ENCODE measurements at regions of chr6 and their contacts with region 1.

Region 1: DNA sequence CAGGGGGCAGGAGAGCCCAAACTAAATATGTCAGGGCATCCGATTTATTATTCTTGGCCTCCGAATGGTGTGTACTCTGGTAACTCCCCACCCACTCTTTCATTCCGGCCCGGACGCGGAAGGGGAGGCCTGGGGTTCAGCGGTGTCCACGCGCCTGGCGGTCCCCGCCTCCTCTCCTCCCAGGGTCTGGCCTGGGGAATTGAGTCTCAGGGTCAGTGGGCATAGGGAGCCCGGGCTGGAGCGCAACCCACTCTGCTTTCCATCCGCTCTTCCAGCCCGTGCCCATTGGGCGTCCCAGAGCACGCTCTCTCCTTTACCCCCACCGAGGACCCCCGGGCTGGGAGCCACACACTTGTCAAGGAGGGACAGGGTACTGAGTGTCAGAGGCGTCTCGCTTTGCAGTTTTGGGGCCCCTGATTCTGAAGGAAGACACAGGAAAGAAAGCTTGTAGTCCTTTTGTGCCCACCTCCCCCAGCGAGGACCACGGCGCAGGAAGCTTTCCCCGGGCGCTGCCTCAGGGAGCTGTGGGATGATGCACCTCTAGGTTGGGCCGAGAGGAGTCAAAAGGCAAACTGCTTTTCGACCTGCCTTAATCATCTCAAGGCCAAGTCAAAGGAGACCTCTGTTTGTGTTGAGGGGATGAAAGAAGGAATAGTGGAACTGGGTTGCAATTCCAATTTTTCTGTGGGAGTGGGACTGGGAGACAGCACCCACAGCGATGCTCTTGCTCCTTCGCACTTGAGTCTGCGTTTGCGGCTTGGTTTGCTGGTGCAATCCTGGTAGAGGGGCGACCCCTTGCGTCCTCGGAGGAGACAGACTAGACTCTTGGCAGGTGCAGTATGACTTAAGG is 2.5 kb downstream of the RSPO3 start:
- DNase-seq: peak; percentile 59 to 91 (median 78)
- H3K4me3 ChIP-seq: peak overlapping the region in 58 of 59 donors; percentile 45 to 79 (median 62)
- H3K27ac ChIP-seq: peak overlapping the region in 2 of 59 donors; percentile 2 to 5
- H3K27me3 ChIP-seq: peaks cover 0 to 61% (median 25%) of the 10 kb centered on the region in 45 donors
- CTCF ChIP-seq: peak; percentile 17 to 85 (median 68)

Region 2: GRCh38 chr6:125995972-125996580 is 1124.9 kb before region 1 on chr6:
- intact Hi-C with region 1: loop called in 1 of 2 experiments (anchors 5 kb)
- DNase-seq: peak in 7 of 10 donors; percentile 32 to 75 (median 67)
- H3K4me3 ChIP-seq: peak overlapping the region in 27 of 59 donors; percentile 2 to 49 (median 27)
- H3K27ac ChIP-seq: no peak overlapping the region
- H3K27me3 ChIP-seq: no peaks in the 10 kb centered on the region
- CTCF ChIP-seq: peak; percentile 84 to 99 (median 95)

Region 3: DNA sequence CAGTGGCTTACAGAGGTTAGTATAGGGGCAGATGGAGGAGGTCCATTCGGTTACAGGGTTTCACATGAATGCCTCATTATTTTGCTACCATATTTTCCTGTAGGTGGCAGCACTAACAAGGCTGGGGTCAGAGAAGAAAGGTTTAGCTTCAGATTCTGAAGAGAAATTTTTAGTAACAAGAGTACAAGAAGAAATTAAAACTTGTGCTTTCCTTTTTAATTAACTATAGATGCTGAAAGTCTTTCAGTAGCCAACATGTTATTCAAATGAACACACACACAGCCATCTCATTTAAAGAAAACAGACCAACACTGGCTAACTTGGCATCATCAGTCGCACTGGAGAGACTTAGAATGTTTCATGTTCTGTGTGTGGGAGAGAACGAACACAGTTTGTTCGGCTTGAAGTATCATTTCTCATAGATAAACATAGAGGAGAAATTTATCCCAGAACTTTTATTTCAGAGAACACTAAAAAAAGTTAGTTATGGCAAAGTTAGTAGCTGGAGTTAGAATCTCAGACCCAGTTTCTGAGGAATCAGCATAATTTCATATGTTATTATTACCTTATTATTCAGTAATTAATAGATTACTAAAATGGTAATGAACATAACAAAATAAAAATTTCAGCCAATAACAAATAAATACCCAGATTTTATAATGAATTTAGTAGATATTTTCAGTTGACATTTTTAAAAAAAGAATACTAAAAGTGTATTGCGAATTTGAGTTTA is 316.5 kb before region 1 on chr6:
- intact Hi-C with region 1: loop called (anchors 5 kb)
- DNase-seq: peak in 1 of 10 donors; percentile 7
- H3K4me3 ChIP-seq: no peak overlapping the region
- H3K27ac ChIP-seq: no peak overlapping the region
- H3K27me3 ChIP-seq: peaks cover 0 to 23% (median 0%) of the 10 kb centered on the region in 45 donors
- CTCF ChIP-seq: peak; percentile 41 to 81 (median 69)

Region 4: DNA sequence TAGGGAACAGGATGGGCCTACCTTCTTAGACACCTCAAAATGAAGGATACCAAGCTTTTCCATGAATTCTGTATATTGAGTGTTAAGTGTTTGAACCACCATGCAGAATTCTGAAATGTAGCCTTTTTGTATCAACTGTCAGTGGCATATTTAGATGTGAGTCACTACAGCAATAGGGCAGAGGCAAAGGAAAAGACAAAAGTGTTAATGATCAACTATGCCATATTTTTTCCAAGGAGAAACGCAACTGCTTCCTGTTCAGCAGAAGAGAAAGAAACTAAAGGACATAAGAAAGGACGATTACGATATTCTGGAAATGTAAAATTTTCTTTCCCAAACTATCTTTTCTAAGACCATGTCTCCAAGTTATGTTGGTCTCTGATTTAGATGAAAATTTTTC is 107.1 kb before region 1 on chr6:
- intact Hi-C with region 1: no loop called
- DNase-seq: no peak
- H3K4me3 ChIP-seq: no peak overlapping the region
- H3K27ac ChIP-seq: no peak overlapping the region
- H3K27me3 ChIP-seq: no peaks in the 10 kb centered on the region
- CTCF ChIP-seq: no peak